PC-3 (cell line): ENCODE measurements at regions of chr5 and their contacts with region 1.

Region 1: GRCh38 chr5:82107267-82107666 is 135.4 kb downstream of the ATG10 start:
- DNase-seq: peak; percentile 30
- ATAC-seq: peak; percentile 56; the same call in 1 of the 2 replicates
- H3K4me3 ChIP-seq: no peak overlapping the region
- H3K27ac ChIP-seq: no peak overlapping the region
- H3K4me1 ChIP-seq: no peaks in the 10 kb centered on the region
- H3K27me3 ChIP-seq: no peaks in the 10 kb centered on the region
- CTCF ChIP-seq: peak; percentile 76

Region 2: GRCh38 chr5:81696418-81697397 is 410.6 kb before region 1 on chr5:
- CTCF ChIA-PET with region 1: no interaction called
- POLR2A ChIA-PET with region 1: interaction called, 10 read pairs
- intact Hi-C with region 1: no loop called
- DNase-seq: no peak
- ATAC-seq: no peak
- H3K4me3 ChIP-seq: no peak overlapping the region
- H3K27ac ChIP-seq: no peak overlapping the region
- H3K4me1 ChIP-seq: peaks cover 7% of the 10 kb centered on the region
- H3K27me3 ChIP-seq: no peaks in the 10 kb centered on the region
- CTCF ChIP-seq: no peak

Region 3: DNA sequence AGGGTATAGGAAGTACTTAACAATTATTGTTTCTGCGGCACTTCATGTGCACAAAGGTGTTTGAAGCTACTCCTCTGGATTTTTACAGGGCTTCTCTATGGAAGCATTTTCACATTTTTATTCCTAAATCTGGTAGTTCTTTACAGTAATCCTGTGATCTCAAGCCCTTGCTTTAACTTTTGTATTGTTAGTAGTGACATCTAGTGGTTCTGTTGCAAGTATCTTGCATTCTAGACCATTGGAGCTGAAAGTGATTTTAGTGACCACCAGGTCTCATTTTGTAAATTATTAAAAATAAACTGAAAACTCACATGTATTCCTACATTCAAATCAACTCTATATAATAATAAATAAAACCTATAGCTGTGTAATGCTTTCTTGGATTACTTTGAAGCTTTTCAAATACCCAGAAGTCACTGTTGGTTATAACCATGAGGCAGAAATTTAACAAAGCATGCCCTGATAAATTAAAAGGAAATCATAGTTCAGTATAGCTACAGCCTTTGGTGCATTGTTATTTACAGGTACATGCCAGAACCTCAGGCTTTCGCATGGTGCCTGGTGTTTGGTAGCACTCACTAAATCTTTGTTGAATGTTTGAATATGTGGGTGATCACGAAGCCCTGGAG is 152.0 kb after region 1 on chr5:
- CTCF ChIA-PET with region 1: no interaction called
- POLR2A ChIA-PET with region 1: no interaction called
- intact Hi-C with region 1: loop called (anchors 1 kb)
- DNase-seq: peak; percentile 30
- ATAC-seq: peak; percentile 77
- H3K4me3 ChIP-seq: no peak overlapping the region
- H3K27ac ChIP-seq: no peak overlapping the region
- H3K4me1 ChIP-seq: no peaks in the 10 kb centered on the region
- H3K27me3 ChIP-seq: no peaks in the 10 kb centered on the region
- CTCF ChIP-seq: peak; percentile 68